Dorsolateral prefrontal cortex (tissue), 120 donors: ENCODE measurements at regions of chrX and their contacts with region 1.

Region 1: GRCh38 chrX:130401415-130402207 is at the start of gene RBMX2:
- DNase-seq: peak; percentile 49 to 81 (median 64)
- H3K4me3 ChIP-seq: peak within 1 kb of the TSS; percentile 44 to 84 (median 69)
- H3K27ac ChIP-seq: peak within 1 kb of the TSS in 49 of 59 donors; percentile 2 to 89 (median 66)
- H3K27me3 ChIP-seq: peaks cover 0 to 49% (median 16%) of the 10 kb centered on the region in 45 donors
- CTCF ChIP-seq: peak in 17 of 56 donors; percentile 6 to 42 (median 18)
- total RNA-seq, gene RBMX2: 16.6 to 38.3 (median 24.8) TPM

Region 2: DNA sequence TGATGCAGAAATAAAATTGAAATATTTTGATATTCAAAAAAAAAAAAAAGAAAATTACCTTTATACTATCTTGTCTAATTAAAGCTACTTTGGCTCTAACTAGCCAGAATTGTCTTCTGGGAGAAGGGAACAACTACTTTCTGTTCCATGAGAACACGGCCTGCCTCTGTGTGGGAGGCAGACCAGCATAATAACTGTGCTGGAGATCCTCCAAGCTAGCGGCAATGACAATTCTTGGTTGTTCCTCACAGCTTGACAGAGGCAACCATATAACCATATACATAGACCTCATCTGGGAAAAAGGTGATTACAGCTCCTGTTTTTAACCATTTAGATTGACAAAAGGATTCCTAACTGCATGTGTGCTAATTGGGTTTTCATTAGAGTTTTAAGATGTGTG is 95.9 kb after region 1 on chrX:
- intact Hi-C with region 1: loop called in 1 of 2 experiments (anchors 5 kb)
- DNase-seq: peak in 9 of 10 donors; percentile 3 to 73 (median 59)
- H3K4me3 ChIP-seq: peak overlapping the region in 3 of 59 donors; percentile 1 to 7 (median 5)
- H3K27ac ChIP-seq: peak overlapping the region in 51 of 59 donors; percentile 1 to 88 (median 72)
- H3K27me3 ChIP-seq: peaks cover 0 to 22% (median 0%) of the 10 kb centered on the region in 45 donors
- CTCF ChIP-seq: peak in 4 of 56 donors; percentile 14 to 39 (median 24)